Activated naive CD4-positive, alpha-beta T cell treated with anti-CD3 and anti-CD28 coated beads for 36 hours (primary cell): ENCODE measurements at regions of chrX and their contacts with region 1.

Region 1: GRCh38 chrX:47361538-47362511 is 8.6 kb upstream of the ZNF157 start:
- DNase-seq: peak; percentile 18
- H3K4me3 Mint-ChIP-seq: no peak overlapping the region
- H3K27ac Mint-ChIP-seq: no peak overlapping the region
- H3K4me1 Mint-ChIP-seq: peaks cover 20% of the 10 kb centered on the region
- H3K27me3 Mint-ChIP-seq: no peaks in the 10 kb centered on the region

Region 2: DNA sequence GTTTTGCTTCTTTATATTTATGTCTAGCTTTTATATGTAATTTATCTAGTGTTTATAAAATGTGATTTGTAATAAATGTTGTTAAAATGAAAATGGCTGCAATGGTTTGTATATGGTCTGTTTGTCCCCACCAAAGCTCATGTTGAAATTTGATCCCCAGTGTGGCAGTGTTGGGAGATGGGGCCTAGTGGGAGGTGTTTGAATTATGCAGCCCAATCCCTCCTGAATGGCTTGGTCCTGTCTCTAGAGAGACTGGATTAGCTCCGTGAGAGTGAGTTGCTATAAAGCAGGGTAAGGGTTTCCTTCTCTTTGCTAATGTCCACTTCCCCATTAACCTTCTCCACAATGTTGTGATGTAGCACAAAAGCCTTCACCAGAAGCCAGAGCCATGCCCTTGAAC is 479.6 kb before region 1 on chrX:
- CTCF ChIA-PET with region 1: no interaction called
- intact Hi-C with region 1: no loop called
- DNase-seq: no peak
- H3K4me3 Mint-ChIP-seq: no peak overlapping the region
- H3K27ac Mint-ChIP-seq: no peak overlapping the region
- H3K4me1 Mint-ChIP-seq: peaks cover 2% of the 10 kb centered on the region
- H3K27me3 Mint-ChIP-seq: no peaks in the 10 kb centered on the region

Region 3: GRCh38 chrX:47217642-47218279 is 144.1 kb before region 1 on chrX:
- CTCF ChIA-PET with region 1: no interaction called
- intact Hi-C with region 1: loop called (anchors 1 kb)
- DNase-seq: peak; percentile 98
- H3K4me3 Mint-ChIP-seq: peak overlapping the region; percentile 80
- H3K27ac Mint-ChIP-seq: peak overlapping the region; percentile 98
- H3K4me1 Mint-ChIP-seq: peaks cover 37% of the 10 kb centered on the region
- H3K27me3 Mint-ChIP-seq: no peaks in the 10 kb centered on the region